Activated T-helper 2 cell treated with anti-CD3 and anti-CD28 coated beads, Interferon-gamma antibody, Interleukin-2, Interleukin-4, amounts not matched to agents 10 μg/mL and 5 μg/mL and 100 μg/mL, durations not matched to agents 14 hours and 24 hours and 36 hours (primary cell): ENCODE measurements at regions of chr11 and their contacts with region 1.

Region 1: DNA sequence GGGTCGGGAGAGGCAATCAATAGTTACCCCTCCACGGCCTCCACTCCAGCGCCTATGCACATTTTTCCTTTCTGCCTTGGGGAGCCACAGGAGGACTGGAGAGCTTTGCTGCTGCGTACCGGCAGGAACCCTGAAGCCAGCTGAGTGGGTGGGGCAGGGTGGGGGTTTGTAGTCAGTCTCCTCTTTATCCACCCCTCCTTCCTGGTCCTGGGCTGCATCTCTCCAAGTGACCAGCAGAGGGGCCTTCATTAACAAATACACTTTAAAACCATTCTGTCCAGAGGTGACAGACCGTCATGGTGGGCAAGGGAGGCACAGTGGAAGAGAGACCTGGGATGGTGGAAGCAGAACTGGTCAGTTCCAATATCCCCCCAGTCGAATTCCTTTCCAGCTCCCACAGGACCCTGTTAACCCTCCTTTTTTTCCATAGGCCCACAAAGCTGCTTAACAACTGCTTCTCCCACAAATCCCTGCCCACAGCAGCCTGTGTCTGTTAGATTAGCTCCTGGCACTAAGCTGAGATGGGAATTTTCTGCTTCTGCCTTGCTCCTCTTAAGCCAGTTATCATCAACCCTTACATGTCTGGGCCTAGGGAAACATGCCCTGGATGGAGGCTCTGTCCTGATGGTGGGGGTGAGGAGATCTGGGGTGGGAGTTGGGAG is 3.9 kb upstream of the ABCG4 start:
- DNase-seq: no peak
- H3K4me3 Mint-ChIP-seq: no peak overlapping the region
- H3K27ac Mint-ChIP-seq: no peak overlapping the region
- H3K4me1 Mint-ChIP-seq: peaks cover 2% of the 10 kb centered on the region
- H3K27me3 Mint-ChIP-seq: peaks cover 46% of the 10 kb centered on the region

Region 2: GRCh38 chr11:119101759-119102423 is 43.1 kb before region 1 on chr11 and contains the start of gene DPAGT1:
- intact Hi-C with region 1: no loop called
- DNase-seq: peak; percentile 84
- H3K4me3 Mint-ChIP-seq: peak within 1 kb of the TSS; percentile 91
- H3K27ac Mint-ChIP-seq: peak within 1 kb of the TSS; percentile 98
- H3K4me1 Mint-ChIP-seq: peaks cover 32% of the 10 kb centered on the region
- H3K27me3 Mint-ChIP-seq: no peaks in the 10 kb centered on the region
- total RNA-seq, gene DPAGT1: 82.2 and 83.4 TPM in 2 replicates

Region 3: DNA sequence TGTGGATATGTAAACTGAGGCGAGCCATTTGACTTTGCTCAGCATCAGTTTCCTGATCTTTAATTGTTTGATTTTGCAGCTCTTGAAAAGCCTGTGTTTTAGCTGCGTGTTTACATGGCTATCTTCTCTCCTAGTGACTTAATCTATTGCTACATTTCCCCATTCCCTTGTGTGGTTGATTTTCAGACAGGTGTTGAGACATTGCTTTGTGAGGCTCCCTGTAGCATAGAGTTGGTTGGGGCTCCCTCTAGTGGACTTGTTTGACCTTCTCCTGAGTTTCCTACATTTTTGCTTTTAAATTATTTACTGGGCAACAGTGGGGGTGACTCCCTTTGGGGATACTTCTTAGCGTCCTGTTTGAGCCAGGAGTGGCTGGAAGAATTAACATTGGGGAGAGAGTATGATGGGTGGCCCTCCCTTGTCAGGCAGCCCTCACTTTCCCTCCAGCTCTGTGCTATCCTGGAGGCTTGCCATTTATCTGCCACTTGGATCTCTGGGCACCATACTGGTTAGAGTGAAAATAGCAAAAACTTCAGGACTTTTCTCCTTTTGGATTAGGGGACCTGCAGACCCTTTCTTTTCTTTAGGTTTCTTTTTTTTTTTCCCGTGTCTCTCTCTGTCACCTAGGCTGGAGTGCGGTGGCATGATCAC is 52.0 kb after region 1 on chr11:
- intact Hi-C with region 1: loop called (anchors 2 kb)
- DNase-seq: peak; percentile 52
- H3K4me3 Mint-ChIP-seq: no peak overlapping the region
- H3K27ac Mint-ChIP-seq: no peak overlapping the region
- H3K4me1 Mint-ChIP-seq: peaks cover 2% of the 10 kb centered on the region
- H3K27me3 Mint-ChIP-seq: peaks cover 10% of the 10 kb centered on the region